ENCODE measurements at regions of chr4 and their contacts with region 1.

Region 1: DNA sequence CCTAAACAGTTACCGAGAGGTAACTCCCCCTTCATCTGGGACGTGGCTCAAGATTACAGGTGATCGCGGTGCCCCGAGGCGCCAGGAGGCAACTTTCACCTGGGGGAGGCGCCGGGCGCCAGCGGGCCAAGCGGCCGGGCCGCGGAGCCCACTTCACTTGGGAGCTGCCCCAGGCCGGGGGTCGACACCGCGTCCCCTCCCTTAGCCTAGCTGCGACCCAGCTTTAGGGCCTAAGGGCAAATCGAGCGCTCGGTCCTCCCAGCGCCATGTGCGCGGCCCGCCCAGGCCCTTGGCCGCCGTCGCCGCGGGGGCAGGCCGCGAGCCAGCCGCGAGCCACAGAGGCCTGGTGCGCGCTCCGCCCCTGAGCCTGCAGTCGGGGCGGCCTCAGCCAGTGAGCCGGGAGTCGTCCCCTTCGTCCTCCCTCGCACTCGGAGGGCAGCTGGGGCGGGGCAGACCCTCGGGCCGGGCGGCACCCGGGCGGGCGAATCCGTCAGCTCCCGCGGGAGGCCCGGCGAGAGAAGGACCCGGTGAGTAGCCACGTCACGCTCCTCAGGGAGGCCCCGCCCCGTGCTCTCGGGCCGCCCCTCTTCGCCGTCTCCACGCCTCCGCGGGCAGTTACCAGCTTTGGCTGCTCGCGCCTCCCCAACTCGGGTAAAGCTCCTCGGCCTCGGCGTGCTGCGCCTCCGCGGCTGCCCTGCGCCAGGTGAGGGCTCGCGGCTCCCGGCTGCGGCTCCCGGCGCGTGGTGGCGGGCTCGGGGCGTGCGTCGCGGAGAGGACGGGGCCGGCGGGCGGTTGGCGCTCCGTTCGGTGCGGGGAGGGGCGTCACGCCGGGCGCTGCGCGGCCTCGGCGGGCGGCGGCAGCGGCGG is at the start of gene LARP1B:
- DNase-seq: peak; percentile 93

Region 2: DNA sequence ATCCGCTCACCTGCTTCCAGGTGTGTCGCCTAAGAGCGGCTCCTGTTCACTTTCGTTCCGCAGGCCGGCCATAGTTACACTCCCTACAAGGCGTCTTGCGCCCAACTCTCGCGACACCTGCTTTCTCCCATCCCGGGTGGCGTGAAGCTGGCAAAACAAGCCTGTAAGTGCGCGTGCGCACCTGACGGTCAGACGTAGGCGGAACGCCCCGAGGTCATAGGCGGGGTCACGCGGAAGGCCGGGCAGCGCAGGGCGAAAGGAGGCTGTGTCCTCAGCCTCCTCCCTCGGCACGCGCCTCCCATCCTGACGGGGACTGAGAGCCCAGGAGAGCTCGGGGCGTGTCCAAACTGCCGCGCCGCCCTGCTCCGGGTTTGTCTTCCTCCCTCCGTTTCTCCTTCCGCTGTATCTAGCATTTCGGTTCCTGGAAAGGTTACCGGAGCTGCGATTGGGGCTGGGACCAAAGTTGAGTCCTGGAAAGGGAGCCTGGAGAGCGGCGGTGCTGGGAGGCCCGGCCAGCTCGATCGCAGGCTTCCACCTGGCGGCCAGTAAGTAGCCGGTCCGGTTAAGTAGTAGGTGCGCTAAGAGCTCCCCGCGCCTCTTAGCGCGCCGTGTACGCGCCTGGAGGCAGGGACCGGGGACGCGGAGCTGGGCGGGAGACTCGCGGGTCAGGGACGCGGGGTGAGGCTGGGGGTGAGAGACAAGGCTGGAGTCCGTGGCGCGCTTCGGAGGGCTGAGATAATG is 95.7 kb before region 1 on chr4 and contains the starts of genes ABHD18 and MFSD8:
- CTCF ChIA-PET with region 1: no interaction called
- POLR2A ChIA-PET with region 1: interaction called, 24 read pairs
- DNase-seq: peak; percentile 94

Measured in HEK293T (cell line).